ENCODE measurements at regions of chr3 and their contacts with region 1.

Region 1: DNA sequence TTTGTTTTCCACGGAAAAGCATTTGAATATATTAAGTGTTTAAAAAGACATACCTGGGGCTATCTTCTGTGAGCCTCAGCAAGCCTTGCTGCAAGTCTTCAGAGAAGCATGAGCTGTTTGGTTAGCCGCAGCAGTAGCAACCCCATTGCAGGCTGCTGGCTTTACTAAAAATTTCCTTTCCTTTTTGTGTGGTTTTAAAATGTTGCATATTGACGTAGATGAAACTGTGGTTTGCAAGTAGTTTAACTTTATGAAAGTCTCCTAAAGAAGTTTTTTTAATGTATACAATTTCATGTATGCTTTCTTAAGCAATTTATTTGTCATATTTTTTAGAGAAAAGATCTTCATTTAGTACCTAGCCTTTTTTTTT is at the start of gene GPR171:
- DNase-seq: peak; percentile 82
- ATAC-seq: peak; percentile 66
- H3K4me3 Mint-ChIP-seq: peak within 1 kb of the TSS; percentile 83
- H3K27ac Mint-ChIP-seq: peak within 1 kb of the TSS; percentile 96
- H3K4me1 Mint-ChIP-seq: peaks cover 63% of the 10 kb centered on the region
- H3K27me3 Mint-ChIP-seq: no peaks in the 10 kb centered on the region
- total RNA-seq, gene GPR171: 84.9 to 111 TPM

Region 2: DNA sequence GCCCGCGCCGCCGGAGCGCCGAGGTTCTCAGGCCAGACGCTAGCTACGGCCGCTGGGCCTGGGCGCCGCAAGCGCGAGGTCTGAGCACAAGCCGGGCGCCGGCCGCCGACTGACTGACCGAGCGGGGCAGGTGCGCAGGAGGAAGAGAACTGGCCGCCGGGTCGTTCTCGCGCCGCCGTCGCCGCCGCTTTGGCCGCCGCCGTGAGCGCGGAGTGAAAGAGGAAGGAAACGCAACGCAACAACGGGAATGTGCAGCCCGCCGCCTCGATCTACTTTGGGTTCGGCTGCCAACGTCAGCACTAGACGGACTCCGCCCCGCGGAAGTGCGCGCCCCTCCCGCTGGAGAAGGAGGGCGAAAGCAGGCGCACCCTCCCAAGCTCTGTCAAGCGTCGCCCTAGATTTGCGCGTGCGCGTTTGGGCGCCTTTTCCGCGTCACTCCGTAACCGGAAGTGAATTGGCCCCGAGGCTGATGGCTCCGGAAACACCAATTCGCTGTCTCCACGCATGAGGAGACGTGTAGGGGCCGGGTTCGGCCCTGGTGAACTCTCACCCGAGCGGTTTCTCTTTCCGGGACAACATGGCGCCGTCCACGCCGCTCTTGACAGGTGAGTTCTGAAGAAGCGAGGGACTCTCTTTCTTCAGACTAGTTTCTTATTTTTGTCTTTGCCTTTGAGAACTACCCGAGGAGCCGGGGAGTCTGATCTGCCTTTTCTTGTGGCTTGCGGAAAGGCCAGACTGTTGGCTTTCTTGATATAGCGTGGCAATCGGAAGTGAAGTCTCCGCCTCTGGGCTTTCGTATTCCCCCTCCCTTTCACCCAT is 656.6 kb before region 1 on chr3 and contains the starts of genes EIF2A and SERP1:
- CTCF ChIA-PET with region 1: no interaction called
- POLR2A ChIA-PET with region 1: no interaction called
- intact Hi-C with region 1: loop called in 1 of 2 experiments (anchors 1 kb)
- DNase-seq: peak; percentile 99
- ATAC-seq: peak; percentile 92
- H3K4me3 Mint-ChIP-seq: peak within 1 kb of the TSS; percentile 90
- H3K27ac Mint-ChIP-seq: peak within 1 kb of the TSS; percentile 96
- H3K4me1 Mint-ChIP-seq: peaks cover 68% of the 10 kb centered on the region
- H3K27me3 Mint-ChIP-seq: no peaks in the 10 kb centered on the region
- total RNA-seq, gene EIF2A: 119 to 182 TPM
- total RNA-seq, gene SERP1: 84.6 to 96.1 TPM

Region 3: GRCh38 chr3:150763122-150763841 is 439.8 kb before region 1 on chr3 and contains the start of gene SIAH2:
- CTCF ChIA-PET with region 1: no interaction called
- POLR2A ChIA-PET with region 1: interaction called, 8 read pairs
- intact Hi-C with region 1: loop called (anchors 1 to 2 kb)
- DNase-seq: peak; percentile 96
- ATAC-seq: peak; percentile 72
- H3K4me3 Mint-ChIP-seq: peak within 1 kb of the TSS; percentile 85
- H3K27ac Mint-ChIP-seq: peak within 1 kb of the TSS; percentile 98
- H3K4me1 Mint-ChIP-seq: peaks cover 51% of the 10 kb centered on the region
- H3K27me3 Mint-ChIP-seq: no peaks in the 10 kb centered on the region
- total RNA-seq, gene SIAH2: 85.7 to 154 TPM

Region 4: DNA sequence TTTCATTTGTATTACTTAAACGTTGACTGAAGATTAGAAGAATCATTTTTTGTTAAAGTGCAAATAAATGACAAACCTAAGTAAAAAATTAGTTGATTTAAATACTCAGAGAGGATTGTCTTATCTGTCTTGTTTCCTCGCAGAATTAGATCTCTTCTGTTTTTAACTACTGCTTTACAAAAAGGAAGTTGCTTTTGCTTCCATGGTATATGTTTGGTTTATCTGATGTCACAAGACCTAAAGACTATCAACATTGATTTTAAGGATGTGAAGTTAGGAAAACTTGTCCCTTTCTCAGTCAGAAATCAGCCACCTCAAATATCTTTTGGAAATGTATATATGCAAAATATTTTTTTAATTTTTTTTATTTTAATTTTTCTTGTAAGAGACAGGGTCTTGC is 28.7 kb before region 1 on chr3:
- CTCF ChIA-PET with region 1: interaction called, 9 read pairs
- POLR2A ChIA-PET with region 1: interaction called, 14 read pairs
- intact Hi-C with region 1: loop called in 1 of 2 experiments (anchors 1 kb)
- DNase-seq: no peak
- ATAC-seq: no peak
- H3K4me3 Mint-ChIP-seq: no peak overlapping the region
- H3K27ac Mint-ChIP-seq: no peak overlapping the region
- H3K4me1 Mint-ChIP-seq: peaks cover 34% of the 10 kb centered on the region
- H3K27me3 Mint-ChIP-seq: no peaks in the 10 kb centered on the region

Region 5: DNA sequence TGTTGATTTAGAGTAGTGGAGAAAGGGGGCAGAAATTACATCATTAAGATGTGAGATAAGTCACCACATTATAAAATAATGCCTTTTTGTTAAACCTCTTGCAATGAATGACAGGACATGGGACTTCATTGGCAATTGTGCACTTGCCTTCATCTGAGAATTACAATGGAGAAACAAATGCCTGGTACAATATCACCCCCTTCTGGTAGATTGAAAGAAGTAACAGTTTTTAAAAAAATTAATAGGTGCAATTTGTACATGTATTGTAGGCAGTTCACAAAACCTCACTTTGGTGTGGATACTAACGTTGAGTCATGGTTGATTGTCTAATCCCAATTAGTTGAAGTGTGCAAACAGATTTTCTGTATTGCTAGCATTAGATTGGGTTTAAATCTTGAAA is 79.9 kb after region 1 on chr3:
- CTCF ChIA-PET with region 1: interaction called, 4 read pairs
- POLR2A ChIA-PET with region 1: interaction called, 6 read pairs
- intact Hi-C with region 1: loop called in 1 of 2 experiments (anchors 2 kb)
- DNase-seq: no peak
- ATAC-seq: peak; percentile 57
- H3K4me3 Mint-ChIP-seq: no peak overlapping the region
- H3K27ac Mint-ChIP-seq: no peak overlapping the region
- H3K4me1 Mint-ChIP-seq: peaks cover 29% of the 10 kb centered on the region
- H3K27me3 Mint-ChIP-seq: no peaks in the 10 kb centered on the region

Region 6: DNA sequence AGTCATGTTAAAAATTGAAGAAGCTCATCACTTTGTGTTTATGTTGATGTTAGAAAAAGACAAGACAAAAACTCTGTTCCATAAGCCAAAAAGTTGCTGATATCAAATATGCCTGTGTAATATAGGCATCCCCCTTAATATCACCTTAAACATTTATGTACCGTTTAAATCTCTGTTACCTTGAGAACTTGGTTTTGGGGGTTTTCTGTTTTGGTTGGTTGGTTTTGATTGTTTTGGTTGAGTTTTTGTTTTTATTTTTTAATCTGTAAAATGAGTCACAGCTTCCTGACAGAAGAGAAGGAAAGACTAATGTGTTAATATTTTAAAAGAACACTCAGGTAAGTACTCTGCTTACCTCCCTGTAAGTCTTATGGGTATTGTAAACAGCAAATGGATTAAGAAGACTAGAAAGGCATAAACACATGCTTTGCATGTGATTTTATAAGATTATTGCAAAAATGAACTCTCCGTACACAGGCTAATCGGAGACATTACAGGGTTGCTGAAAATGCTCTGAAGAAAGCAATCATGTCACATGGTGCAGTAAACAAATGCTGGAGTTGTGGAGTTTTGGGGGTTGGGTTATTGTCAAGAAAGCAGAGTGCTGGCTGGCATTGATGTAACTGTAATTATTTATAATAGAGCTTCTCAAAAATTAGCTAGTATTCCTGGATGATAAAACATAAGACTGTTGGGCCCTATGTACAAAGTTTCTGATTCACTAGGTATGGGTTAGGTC is 996.2 kb after region 1 on chr3:
- CTCF ChIA-PET with region 1: no interaction called
- POLR2A ChIA-PET with region 1: no interaction called
- intact Hi-C with region 1: loop called in 1 of 2 experiments (anchors 2 kb)
- DNase-seq: no peak
- ATAC-seq: peak; percentile 24
- H3K4me3 Mint-ChIP-seq: peak overlapping the region; percentile 72
- H3K27ac Mint-ChIP-seq: peak overlapping the region; percentile 96
- H3K4me1 Mint-ChIP-seq: peaks cover 67% of the 10 kb centered on the region
- H3K27me3 Mint-ChIP-seq: no peaks in the 10 kb centered on the region

Region 7: GRCh38 chr3:153161138-153161713 is 1958.2 kb after region 1 on chr3:
- CTCF ChIA-PET with region 1: no interaction called
- POLR2A ChIA-PET with region 1: no interaction called
- intact Hi-C with region 1: loop called in 1 of 2 experiments (anchors 5 kb)
- DNase-seq: peak; percentile 94
- ATAC-seq: peak; percentile 83
- H3K4me3 Mint-ChIP-seq: peak overlapping the region; percentile 97
- H3K27ac Mint-ChIP-seq: peak overlapping the region; percentile 97
- H3K4me1 Mint-ChIP-seq: peaks cover 32% of the 10 kb centered on the region
- H3K27me3 Mint-ChIP-seq: no peaks in the 10 kb centered on the region

Measured in activated CD4-positive, alpha-beta T cell treated with anti-CD3 and anti-CD28 coated beads for 36 hours (primary cell).